ENCODE measurements at regions of chr3 and their contacts with region 1.

Region 1: DNA sequence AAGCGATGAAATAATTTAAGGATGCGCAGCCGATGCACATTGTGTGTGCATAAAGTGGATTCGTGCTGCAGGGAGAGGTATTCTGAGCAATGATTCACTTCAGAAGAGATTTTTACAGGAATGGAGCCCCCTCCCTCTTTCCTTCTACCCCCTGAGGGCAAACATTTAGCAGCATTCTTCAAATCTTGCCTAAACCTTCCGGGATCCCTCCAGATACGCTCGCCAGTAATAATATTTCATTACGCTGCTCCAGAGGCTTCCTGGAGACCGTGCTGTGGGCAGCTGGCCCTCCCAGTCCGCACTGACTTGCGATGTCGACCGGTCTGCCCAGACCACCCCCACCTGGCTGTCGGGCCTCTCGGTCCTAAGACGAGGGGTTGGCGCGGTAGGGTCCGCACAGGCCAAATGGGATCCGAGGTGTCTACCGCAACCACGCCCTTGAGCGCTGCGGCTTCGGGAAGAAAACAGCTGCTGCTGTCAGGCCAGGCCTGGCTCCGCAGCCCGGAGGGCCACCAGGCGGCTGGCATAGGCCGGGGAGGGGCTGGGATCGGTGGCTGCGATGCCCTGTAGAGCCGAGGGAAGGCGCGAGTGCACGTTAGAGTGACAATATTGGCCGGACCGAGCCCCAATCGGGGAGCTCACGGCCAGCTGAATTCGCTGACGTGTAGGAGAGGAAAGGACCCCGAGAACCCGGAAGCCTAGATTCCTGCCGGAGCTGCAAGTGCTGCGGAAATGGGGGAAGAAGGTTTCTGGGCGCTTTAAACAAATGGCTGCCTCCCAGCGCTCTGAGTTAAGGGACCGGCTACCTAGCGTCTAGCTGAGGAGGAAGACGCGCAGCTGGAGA is 14.3 kb downstream of the ZIC4 start:
- DNase-seq: peak in 9 of 10 donors; percentile 71 to 96 (median 87)
- H3K4me3 ChIP-seq: peak overlapping the region; percentile 41 to 86 (median 72)
- H3K27ac ChIP-seq: peak overlapping the region; percentile 64 to 99 (median 97)
- H3K27me3 ChIP-seq: peaks cover 0 to 100% (median 79%) of the 10 kb centered on the region in 45 donors
- CTCF ChIP-seq: peak in 55 of 56 donors; percentile 37 to 83 (median 64)

Region 2: DNA sequence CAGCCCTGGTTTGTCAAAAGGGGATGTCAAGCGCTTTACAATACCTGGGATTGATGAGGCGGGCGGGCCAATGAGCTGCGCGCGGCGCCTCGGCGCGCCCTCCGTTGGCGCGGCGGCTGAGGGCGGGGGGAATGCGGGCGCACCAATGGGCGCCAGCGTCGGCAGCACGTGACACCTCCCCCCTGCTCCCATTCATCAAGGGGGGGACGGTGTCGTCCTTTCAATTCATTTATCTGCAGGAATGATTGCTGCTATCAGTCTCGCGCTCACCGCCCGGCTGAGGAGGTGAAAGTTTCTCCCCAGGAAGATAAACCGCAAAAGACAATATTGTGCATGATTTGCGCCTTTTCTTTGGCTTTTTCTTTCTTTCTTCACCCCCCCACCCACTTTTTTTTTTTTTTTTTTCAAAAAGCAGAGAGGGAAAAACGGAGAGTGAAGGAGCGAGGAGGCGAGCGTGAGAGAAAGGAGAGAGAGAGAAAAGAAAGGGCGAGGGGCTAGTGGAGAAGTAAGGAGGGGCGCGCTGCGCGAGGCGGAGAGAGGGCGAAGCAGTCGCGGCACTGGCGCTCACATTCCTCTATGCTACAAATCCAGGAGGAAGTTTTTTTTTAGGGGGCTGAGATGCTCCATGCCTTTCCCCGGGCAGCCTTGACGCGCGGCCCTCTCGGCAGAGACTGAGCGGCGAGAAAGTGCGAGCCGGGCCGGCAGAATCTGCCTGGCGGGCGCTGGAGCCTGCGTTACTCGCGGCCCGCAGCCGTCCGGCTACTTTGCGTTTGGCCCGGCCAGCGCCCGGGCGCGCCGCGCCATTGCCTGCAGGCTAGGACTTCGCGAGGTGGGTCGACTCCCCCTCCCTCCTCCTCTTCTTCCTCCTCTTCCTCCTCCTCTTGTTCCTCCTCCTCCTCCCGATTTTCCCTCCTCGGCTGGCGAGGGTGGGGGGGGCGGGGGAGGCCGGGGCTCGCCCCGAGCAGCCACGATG is 17.4 kb after region 1 on chr3 and contains the start of gene ZIC1:
- intact Hi-C with region 1: loop called in 1 of 2 experiments (anchors 1 kb)
- DNase-seq: peak in 8 of 10 donors; percentile 63 to 93 (median 70)
- H3K4me3 ChIP-seq: peak within 1 kb of the TSS; percentile 44 to 80 (median 67)
- H3K27ac ChIP-seq: peak within 1 kb of the TSS; percentile 45 to 99 (median 85)
- H3K27me3 ChIP-seq: peaks cover 0 to 99% (median 75%) of the 10 kb centered on the region in 45 donors
- CTCF ChIP-seq: peak in 12 of 56 donors; percentile 9 to 40 (median 21)
- total RNA-seq, gene ZIC1: 17.4 to 211 (median 34.4) TPM

Region 3: GRCh38 chr3:147415849-147416248 is 23.8 kb after region 1 on chr3:
- intact Hi-C with region 1: loop called in 1 of 2 experiments (anchors 2 kb)
- DNase-seq: no peak
- H3K4me3 ChIP-seq: peak overlapping the region in 29 of 59 donors; percentile 1 to 76 (median 38)
- H3K27ac ChIP-seq: peak overlapping the region in 29 of 59 donors; percentile 1 to 99 (median 56)
- H3K27me3 ChIP-seq: peaks cover 0 to 91% (median 51%) of the 10 kb centered on the region in 45 donors
- CTCF ChIP-seq: peak in 4 of 56 donors; percentile 11 to 16 (median 14)

Region 4: GRCh38 chr3:147518465-147518864 is 126.5 kb after region 1 on chr3:
- intact Hi-C with region 1: loop called in 1 of 2 experiments (anchors 10 kb)
- DNase-seq: no peak
- H3K4me3 ChIP-seq: no peak overlapping the region
- H3K27ac ChIP-seq: no peak overlapping the region
- H3K27me3 ChIP-seq: no peaks in the 10 kb centered on the region
- CTCF ChIP-seq: no peak

Region 5: GRCh38 chr3:147616998-147617619 is 225.1 kb after region 1 on chr3:
- intact Hi-C with region 1: loop called (anchors 2 to 5 kb)
- DNase-seq: no peak
- H3K4me3 ChIP-seq: peak overlapping the region in 2 of 59 donors; percentile 5 to 9
- H3K27ac ChIP-seq: peak overlapping the region in 7 of 59 donors; percentile 4 to 64 (median 9)
- H3K27me3 ChIP-seq: no peaks in the 10 kb centered on the region
- CTCF ChIP-seq: peak; percentile 39 to 85 (median 68)

Region 6: GRCh38 chr3:147945968-147946519 is 554.0 kb after region 1 on chr3:
- intact Hi-C with region 1: loop called in 1 of 2 experiments (anchors 5 kb)
- DNase-seq: peak in 2 of 10 donors; percentile 38 to 53
- H3K4me3 ChIP-seq: peak overlapping the region; percentile 6 to 65 (median 45)
- H3K27ac ChIP-seq: peak overlapping the region in 58 of 59 donors; percentile 29 to 95 (median 78)
- H3K27me3 ChIP-seq: no peaks in the 10 kb centered on the region
- CTCF ChIP-seq: peak; percentile 19 to 77 (median 56)

Region 7: GRCh38 chr3:148075763-148076716 is 684.0 kb after region 1 on chr3:
- intact Hi-C with region 1: loop called (anchors 5 to 10 kb)
- DNase-seq: peak in 6 of 10 donors; percentile 15 to 62 (median 32)
- H3K4me3 ChIP-seq: peak overlapping the region in 11 of 59 donors; percentile 1 to 34 (median 9)
- H3K27ac ChIP-seq: peak overlapping the region in 51 of 59 donors; percentile 6 to 93 (median 60)
- H3K27me3 ChIP-seq: no peaks in the 10 kb centered on the region
- CTCF ChIP-seq: peak; percentile 58 to 95 (median 86)